Sigmoid colon (tissue), 7 donors: ENCODE measurements at regions of chr15 and their contacts with region 1.

Region 1: DNA sequence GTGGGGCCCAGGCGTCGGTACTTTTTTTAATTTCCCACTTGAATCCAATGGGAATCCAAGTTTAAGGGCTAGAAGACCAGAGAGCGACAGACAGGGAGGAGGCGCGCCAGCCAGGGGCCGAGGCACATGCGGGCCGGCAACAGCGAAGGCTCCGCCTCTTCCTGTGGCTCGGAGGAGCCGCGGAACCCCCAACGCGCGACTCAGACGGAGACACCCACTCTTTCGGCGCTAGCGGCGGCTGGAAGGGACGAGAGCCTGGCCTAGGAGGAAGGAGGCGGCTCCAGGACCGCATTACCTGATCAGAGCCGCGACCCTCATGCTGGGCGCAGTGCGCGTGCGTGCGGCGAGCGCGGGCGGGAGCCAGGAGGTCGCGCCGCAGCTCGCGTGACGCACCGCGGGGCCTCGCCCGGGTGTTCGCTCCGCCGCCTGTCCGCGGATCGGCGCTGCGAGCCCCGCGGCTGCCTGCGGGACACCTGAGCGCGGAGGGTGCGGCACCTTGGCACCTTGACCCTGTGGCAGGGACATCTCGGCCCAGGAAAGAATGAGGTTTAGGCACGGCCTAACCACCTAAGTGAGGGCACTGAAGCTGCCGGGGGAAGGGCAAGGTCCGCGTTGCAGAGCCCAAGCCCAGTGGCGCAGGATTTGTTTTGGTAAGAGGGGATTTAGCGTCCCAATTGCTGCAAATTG is at the start of gene DPH6:
- DNase-seq: peak; percentile 90
- H3K4me3 ChIP-seq: peak within 1 kb of the TSS; percentile 68 to 76 (median 74)
- H3K27ac ChIP-seq: peak within 1 kb of the TSS; percentile 94 to 97 (median 96)
- H3K4me1 ChIP-seq: peaks cover 0 to 19% (median 15%) of the 10 kb centered on the region in 4 donors
- H3K27me3 ChIP-seq: no peaks in the 10 kb centered on the region
- CTCF ChIP-seq: no peak
- EP300 ChIP-seq: no peak
- POLR2A ChIP-seq: peak in 1 of 2 donors; percentile 29
- total RNA-seq, gene DPH6: 9.6 to 13.2 (median 10.5) TPM

Region 2: GRCh38 chr15:34337557-34338306 is 1208.2 kb before region 1 on chr15 and contains the start of gene SLC12A6:
- intact Hi-C with region 1: loop called (anchors 10 kb)
- DNase-seq: peak; percentile 94
- H3K4me3 ChIP-seq: peak within 1 kb of the TSS; percentile 93 to 96 (median 94)
- H3K27ac ChIP-seq: peak within 1 kb of the TSS; percentile 89 to 91 (median 90)
- H3K4me1 ChIP-seq: peaks cover 0 to 47% (median 28%) of the 10 kb centered on the region in 4 donors
- H3K27me3 ChIP-seq: no peaks in the 10 kb centered on the region
- CTCF ChIP-seq: no peak
- EP300 ChIP-seq: no peak
- POLR2A ChIP-seq: no peak
- total RNA-seq, gene SLC12A6: 14.3 to 22.7 (median 20.0) TPM

Region 3: DNA sequence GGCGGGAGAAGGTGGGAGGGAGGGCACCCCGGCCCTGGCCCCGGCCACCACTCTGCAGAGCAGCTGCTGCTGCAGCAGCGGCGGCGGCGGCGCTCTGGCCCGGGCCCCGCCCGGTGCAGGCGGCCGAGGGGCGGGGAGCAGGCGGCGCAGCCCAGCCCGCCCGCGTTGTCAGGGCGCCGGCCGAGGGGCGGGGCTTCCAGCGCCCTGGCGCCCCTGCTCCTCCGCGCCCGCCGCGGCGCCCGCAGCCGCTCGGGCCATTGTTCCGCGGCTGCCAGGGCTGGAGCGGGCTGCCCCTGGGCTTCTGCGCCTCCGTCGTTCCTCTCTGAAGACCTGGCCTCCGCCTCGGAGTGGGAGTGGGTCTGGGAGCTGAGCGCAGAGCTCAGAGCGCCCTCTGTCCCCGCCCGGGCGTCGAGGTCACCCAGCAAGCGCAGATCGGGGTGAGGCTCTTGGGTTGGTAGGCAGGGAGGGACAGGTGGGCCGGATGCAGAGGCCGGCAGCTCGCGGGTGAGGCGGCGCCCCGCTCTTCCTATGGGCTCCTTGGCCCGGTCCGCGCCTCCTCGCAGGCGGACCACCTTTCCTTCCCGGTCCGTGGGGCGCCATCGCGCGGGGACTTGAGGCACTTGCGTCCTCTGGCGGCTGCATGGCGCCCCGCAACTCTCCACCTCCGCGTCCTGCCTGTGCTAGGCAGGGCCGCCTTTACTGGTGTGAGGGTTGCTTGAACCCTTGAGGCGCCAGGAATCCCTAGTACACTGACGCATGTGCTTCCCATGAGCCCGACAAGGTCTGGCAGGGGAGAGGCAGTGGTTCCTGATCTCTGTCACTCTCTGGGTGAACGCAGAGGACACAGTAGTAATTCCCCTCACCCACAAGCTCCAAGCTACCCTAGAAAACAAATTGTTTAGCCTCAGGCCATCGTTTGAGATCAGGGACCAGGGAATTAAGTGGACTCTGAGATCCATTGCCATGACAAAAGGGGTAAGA is 1178.6 kb before region 1 on chr15 and contains the start of gene LPCAT4:
- intact Hi-C with region 1: loop called (anchors 10 kb)
- DNase-seq: peak; percentile 94
- H3K4me3 ChIP-seq: peak within 1 kb of the TSS; percentile 86 to 90 (median 87)
- H3K27ac ChIP-seq: peak within 1 kb of the TSS; percentile 96 to 97 (median 97)
- H3K4me1 ChIP-seq: peaks cover 0 to 23% (median 19%) of the 10 kb centered on the region in 4 donors
- H3K27me3 ChIP-seq: no peaks in the 10 kb centered on the region
- CTCF ChIP-seq: peak; percentile 92 to 97 (median 96)
- EP300 ChIP-seq: no peak
- POLR2A ChIP-seq: peak; percentile 22 to 35
- total RNA-seq, gene LPCAT4: 9.6 to 25.2 (median 15.6) TPM

Region 4: GRCh38 chr15:34987985-34988873 is 557.7 kb before region 1 on chr15 and contains the start of gene ZNF770:
- intact Hi-C with region 1: loop called (anchors 5 kb)
- DNase-seq: peak; percentile 87
- H3K4me3 ChIP-seq: peak within 1 kb of the TSS; percentile 71 to 82 (median 74)
- H3K27ac ChIP-seq: peak within 1 kb of the TSS; percentile 91 to 95 (median 93)
- H3K4me1 ChIP-seq: peaks cover 0 to 36% (median 30%) of the 10 kb centered on the region in 4 donors
- H3K27me3 ChIP-seq: no peaks in the 10 kb centered on the region
- CTCF ChIP-seq: no peak
- EP300 ChIP-seq: no peak
- POLR2A ChIP-seq: peak; percentile 37 to 41
- total RNA-seq, gene ZNF770: 15.9 to 21.4 (median 19.1) TPM

Region 5: DNA sequence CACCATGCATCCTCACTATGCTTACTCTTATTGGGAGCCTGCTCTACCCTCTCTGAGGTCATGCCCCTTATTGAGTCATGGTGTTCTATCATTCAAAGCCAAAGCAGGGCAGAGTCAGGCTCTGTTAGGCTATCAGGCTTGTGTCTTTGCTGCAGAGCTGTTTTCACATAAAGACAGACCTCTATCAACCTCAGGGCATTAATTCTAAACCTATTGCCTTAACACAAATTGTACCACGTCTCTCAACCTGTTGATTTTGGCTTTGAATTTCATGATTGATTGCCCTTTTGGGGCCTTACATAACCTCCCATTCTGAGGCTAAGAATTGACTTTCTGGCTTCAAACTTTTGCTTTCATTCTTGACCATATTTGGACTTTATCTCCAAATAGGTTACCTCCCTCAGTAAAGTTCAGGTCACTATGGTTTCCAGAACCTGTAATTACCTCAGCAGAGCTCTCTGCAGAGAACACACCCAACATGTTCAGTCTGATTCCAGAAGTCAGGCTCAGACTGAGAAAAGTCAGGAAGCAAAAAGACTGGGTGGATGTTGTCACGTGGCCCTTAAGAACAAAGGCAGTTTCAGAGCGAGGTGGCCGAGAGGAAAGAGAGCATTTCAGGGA is 239.5 kb before region 1 on chr15:
- intact Hi-C with region 1: loop called (anchors 10 kb)
- DNase-seq: no peak
- H3K4me3 ChIP-seq: no peak overlapping the region
- H3K27ac ChIP-seq: peak overlapping the region; percentile 55 to 77 (median 66)
- H3K4me1 ChIP-seq: peaks cover 0 to 73% (median 56%) of the 10 kb centered on the region in 4 donors
- H3K27me3 ChIP-seq: no peaks in the 10 kb centered on the region
- CTCF ChIP-seq: no peak
- EP300 ChIP-seq: no peak
- POLR2A ChIP-seq: no peak